ENCODE measurements at regions of chr6 and their contacts with region 1.

Region 1: GRCh38 chr6:44630125-44631028 is 242.9 kb downstream of the CDC5L start:
- DNase-seq: peak; percentile 42
- ATAC-seq: peak; percentile 97
- H3K4me3 ChIP-seq: no peak overlapping the region
- H3K27ac ChIP-seq: no peak overlapping the region
- H3K4me1 ChIP-seq: peaks cover 0 to 7% of the 10 kb centered on the region in 2 experiments; a peak in 1 of 4 replicates
- H3K27me3 ChIP-seq: no peaks in the 10 kb centered on the region
- CTCF ChIP-seq: peak; percentile 64 to 77 (median 73); a peak in 5 of 6 replicates
- POLR2A ChIP-seq: no peak
- RAD21 ChIP-seq: peak; percentile 89

Region 2: DNA sequence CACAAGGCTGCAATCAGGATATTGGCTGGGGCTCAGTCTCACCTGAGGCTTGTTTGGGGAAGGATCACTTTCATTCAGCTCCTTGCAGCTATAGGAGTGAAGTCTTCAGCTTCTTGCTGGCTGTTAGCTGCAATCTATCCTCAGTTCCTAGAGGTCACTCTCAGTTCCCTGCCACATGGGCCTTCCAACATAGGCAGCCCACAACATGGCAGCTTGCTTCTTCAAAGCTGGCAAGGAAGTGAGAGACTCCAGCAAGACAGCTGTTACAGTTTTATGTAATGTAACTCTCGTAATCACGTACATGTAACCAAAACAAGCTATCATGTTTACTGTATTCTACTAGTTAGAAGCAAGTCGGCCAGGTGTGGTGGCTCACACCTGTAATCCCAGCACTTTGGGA is 16.0 kb before region 1 on chr6:
- CTCF ChIA-PET with region 1: interaction called, 10 read pairs
- POLR2A ChIA-PET with region 1: no interaction called
- RAD21 ChIA-PET with region 1: no interaction called
- intact Hi-C with region 1: no loop called
- DNase-seq: no peak
- ATAC-seq: no peak
- H3K4me3 ChIP-seq: no peak overlapping the region
- H3K27ac ChIP-seq: no peak overlapping the region
- H3K4me1 ChIP-seq: no peaks in the 10 kb centered on the region
- H3K27me3 ChIP-seq: no peaks in the 10 kb centered on the region
- CTCF ChIP-seq: no peak
- POLR2A ChIP-seq: no peak
- RAD21 ChIP-seq: no peak

Region 3: GRCh38 chr6:44642870-44643529 is 12.6 kb after region 1 on chr6:
- CTCF ChIA-PET with region 1: interaction called, 10 read pairs
- POLR2A ChIA-PET with region 1: no interaction called
- RAD21 ChIA-PET with region 1: interaction called in 1 of 2 experiments, 3 read pairs
- intact Hi-C with region 1: no loop called
- DNase-seq: no peak
- ATAC-seq: no peak
- H3K4me3 ChIP-seq: no peak overlapping the region
- H3K27ac ChIP-seq: no peak overlapping the region
- H3K4me1 ChIP-seq: no peaks in the 10 kb centered on the region; a peak in 1 of 4 replicates
- H3K27me3 ChIP-seq: no peaks in the 10 kb centered on the region
- CTCF ChIP-seq: no peak
- POLR2A ChIP-seq: no peak
- RAD21 ChIP-seq: no peak

Region 4: DNA sequence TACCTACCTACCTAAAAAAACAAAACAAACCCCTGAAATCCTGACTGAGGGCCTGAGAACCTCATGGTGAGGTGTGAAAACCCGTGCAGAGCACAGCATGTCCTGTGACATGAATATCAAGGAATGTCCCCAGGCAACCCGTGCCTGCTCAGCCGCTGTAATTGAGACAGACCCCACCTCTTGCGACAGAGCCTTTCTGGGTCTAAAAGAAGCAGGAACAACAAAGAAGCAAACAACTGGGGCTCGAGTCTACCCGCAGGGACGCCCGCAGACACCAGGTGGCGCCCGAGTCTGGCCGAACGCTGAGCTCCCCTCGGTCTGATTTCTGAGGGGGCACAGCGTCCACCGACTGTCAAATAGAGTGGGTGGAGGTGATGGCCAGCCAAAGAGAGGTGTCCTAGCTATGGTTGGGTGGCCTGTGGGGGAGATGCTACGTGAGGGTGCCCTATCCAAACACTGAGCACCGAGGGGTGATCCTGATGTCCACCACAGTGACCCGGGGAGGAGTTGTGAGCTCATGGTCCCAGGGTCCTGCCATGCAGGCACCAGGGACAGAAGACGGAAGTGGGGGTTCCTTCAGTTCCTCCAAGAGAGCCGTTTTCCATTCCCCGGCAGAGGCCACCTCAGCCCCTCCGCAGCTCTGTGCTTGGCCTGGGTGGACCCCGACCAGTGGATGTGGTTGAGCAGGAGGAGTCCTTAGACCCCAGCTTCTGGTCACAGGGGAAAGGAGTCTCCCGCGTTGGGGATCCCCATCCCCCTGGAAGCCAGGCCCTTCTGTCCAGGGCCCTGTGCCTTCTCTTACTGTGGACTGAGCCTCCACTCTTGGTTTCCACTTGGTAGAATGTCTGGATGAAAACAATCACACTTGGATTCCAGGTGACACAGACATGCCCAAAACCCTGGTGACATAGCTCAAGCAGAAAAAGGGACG is 25.3 kb after region 1 on chr6:
- CTCF ChIA-PET with region 1: interaction called, 14 read pairs
- POLR2A ChIA-PET with region 1: no interaction called
- RAD21 ChIA-PET with region 1: interaction called in 1 of 2 experiments, 3 read pairs
- intact Hi-C with region 1: no loop called
- DNase-seq: peak; percentile 23
- ATAC-seq: peak; percentile 92
- H3K4me3 ChIP-seq: peak overlapping the region in 1 of 2 experiments; percentile 25; a peak in 1 of 4 replicates
- H3K27ac ChIP-seq: no peak overlapping the region
- H3K4me1 ChIP-seq: peaks cover 0 to 8% of the 10 kb centered on the region in 2 experiments; a peak in 2 of 4 replicates
- H3K27me3 ChIP-seq: no peaks in the 10 kb centered on the region
- CTCF ChIP-seq: peak; percentile 69 to 98 (median 93); a peak in 5 of 6 replicates
- POLR2A ChIP-seq: no peak
- RAD21 ChIP-seq: peak; percentile 97

Region 5: DNA sequence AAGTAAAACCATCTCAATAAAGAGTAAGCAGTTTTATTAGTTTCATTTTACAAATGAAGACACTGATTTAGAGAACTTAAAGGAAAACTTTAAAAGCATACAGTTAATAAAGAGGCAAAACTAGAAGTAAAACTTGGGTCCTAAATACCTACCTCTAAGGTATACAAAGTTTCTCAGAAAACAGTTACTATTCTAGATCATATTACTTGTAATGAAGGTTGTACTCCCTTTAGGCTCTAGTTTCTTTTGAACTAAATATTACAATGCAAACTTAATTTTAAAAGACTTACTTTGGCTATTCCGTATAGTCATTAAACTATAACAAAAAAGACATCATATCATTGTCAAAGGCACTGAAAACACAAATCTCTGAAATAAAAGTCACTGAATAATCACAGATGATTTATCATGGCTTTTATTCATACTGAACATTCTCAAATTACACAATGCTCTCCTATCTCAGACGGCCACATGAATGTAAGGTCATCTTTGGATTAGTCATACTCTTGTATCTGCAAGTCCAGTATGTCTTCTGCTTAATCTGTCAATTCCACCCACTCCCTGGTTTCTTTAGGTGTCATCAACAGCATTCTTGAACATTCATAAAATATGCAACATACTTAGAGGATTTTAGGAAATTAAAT is 336.2 kb after region 1 on chr6:
- CTCF ChIA-PET with region 1: no interaction called
- POLR2A ChIA-PET with region 1: no interaction called
- RAD21 ChIA-PET with region 1: no interaction called
- intact Hi-C with region 1: no loop called
- DNase-seq: peak; percentile 65
- ATAC-seq: peak; percentile 96
- H3K4me3 ChIP-seq: no peak overlapping the region
- H3K27ac ChIP-seq: no peak overlapping the region
- H3K4me1 ChIP-seq: peaks cover 12 to 19% of the 10 kb centered on the region in 2 experiments
- H3K27me3 ChIP-seq: no peaks in the 10 kb centered on the region
- CTCF ChIP-seq: no peak
- POLR2A ChIP-seq: no peak
- RAD21 ChIP-seq: peak; percentile 29; the same call in 1 of the 2 replicates

Region 6: GRCh38 chr6:45922728-45923351 is 1292.5 kb after region 1 on chr6:
- CTCF ChIA-PET with region 1: interaction called, 65 read pairs
- POLR2A ChIA-PET with region 1: interaction called, 3 read pairs
- RAD21 ChIA-PET with region 1: interaction called, 3 to 12 read pairs
- intact Hi-C with region 1: loop called (anchors 1 kb)
- DNase-seq: peak; percentile 52
- ATAC-seq: peak; percentile 93
- H3K4me3 ChIP-seq: no peak overlapping the region
- H3K27ac ChIP-seq: no peak overlapping the region
- H3K4me1 ChIP-seq: no peaks in the 10 kb centered on the region
- H3K27me3 ChIP-seq: no peaks in the 10 kb centered on the region
- CTCF ChIP-seq: peak; percentile 67 to 88 (median 81)
- POLR2A ChIP-seq: no peak
- RAD21 ChIP-seq: peak; percentile 95